Posterior cingulate gyrus (tissue), 11 donors: ENCODE measurements at regions of chr20 and their contacts with region 1.

Region 1: DNA sequence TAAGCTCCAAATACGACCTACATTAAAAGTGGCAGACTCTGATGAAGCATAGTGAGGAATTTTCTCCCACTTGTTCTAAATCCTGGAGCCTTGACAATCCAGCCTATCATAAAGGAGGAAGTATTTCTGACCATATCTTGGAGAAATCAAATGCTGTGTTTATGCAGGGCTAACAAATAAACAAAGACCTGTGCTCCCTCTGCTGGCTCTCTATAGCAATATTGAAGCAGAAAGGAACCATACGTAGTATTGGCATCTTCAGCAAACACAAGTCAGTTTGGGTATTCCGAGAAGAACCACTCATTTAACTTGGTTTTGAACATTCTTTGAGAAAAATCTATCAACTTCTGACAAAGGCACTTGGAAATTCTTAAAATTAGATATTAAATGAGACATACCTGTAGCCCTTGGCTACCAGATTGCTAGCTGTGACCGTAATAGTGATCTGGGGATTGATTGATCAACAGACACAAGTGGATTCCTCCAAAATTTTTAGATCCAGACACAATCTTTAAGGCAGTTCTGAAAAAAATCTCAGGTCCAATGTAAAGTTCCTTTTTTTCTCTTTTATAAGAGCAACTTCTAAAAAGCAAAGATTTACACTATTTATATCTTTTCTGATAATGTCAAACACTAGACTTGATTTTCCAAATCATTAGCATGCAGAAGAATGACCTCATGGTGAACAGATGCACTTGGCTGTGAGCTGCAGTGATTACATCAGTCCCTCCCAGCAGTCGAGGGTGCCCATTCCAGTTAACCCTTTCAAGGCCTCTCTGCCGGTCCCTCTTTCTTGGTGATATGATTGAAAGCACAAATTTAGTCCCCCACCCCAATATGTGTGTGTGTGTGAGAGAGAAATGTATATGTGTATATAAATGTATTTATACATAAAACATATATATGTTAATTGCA is 40.2 kb downstream of the INSM1 start:
- DNase-seq: peak in 5 of 10 donors; percentile 30 to 91 (median 54)

Region 2: DNA sequence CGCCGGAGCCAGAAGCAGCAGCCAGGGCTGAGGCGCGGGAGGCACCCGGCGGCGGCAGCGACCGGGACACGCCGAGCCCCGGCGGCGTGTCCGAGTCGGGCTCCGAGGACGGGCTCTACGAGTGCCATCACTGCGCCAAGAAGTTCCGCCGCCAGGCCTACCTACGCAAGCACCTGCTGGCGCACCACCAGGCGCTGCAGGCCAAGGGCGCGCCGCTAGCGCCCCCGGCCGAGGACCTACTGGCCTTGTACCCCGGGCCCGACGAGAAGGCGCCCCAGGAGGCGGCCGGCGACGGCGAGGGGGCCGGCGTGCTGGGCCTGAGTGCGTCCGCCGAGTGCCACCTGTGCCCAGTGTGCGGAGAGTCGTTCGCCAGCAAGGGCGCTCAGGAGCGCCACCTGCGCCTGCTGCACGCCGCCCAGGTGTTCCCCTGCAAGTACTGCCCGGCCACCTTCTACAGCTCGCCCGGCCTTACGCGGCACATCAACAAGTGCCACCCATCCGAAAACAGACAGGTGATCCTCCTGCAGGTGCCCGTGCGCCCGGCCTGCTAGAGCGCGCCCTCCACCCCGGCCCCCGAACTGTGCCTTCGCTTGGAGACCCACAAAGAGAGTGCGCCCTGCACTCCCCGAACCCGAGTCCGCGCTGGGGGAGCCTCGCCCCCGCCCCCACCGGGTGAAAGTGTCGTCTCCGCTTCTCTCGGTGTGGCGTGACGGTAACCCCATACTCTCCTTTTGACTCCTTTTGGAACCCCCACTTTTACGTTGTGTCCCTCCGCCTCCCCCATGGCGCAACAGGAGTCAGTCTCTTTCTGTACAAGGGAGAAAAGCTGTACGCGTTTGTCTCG is 38.7 kb before region 1 on chr20:
- intact Hi-C with region 1: loop called (anchors 5 kb)
- DNase-seq: peak in 6 of 10 donors; percentile 15 to 87 (median 26)